Pancreas (tissue), 10 donors: ENCODE measurements at regions of chr1 and their contacts with region 1.

Region 1: DNA sequence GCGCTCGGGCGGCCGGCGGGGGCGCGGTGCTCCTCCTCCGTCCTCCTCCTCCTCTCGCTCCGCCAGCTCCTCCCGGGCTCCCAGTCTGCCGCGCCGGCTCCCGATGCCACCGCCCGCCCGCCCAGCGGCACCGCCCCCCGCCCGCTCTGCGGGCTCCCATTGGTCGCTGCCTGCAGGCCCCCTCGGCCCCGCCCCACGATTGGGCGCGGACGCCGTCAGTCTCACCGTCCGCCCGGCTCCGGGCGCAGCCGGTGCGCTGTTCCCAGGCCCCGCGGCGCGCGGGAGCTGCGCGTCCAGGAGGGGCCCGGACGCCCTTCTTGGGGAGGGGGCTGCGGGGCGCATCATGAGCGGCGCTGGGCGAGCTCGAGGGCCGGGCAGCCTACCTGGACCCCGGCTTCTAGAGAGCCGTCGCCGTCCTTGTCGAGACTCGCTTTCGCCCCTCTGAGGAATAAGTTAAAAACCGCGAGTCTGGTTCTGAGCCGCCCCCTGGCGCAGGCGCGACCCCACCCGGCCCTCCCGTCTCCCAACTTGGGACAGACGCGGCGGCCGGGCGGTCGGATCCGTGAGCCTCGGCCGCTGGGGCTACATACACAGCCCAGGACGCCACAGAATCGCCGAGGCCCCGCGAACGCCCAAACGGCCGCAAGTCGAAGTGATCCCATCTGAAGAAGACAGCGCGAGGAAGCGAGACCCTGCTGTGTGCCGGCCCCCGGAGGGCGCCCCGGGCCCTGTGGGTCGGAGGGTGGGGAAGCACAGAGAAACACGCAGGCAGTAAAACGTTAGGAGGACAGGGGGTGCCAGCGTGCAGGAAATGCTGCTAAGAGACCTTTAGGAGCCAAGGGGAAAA is at the start of gene SIPA1L2:
- DNase-seq: peak; percentile 91 to 99 (median 96)
- ATAC-seq: peak; percentile 93 to 98 (median 97)
- H3K4me3 ChIP-seq: peak within 1 kb of the TSS; percentile 39 to 90 (median 69)
- H3K27ac ChIP-seq: peak within 1 kb of the TSS; percentile 73 to 88 (median 80)
- H3K4me1 ChIP-seq: peaks cover 0 to 2% (median 0%) of the 10 kb centered on the region in 3 donors
- H3K27me3 ChIP-seq: no peaks in the 10 kb centered on the region
- CTCF ChIP-seq: peak in 1 of 4 donors; percentile 14
- total RNA-seq, gene SIPA1L2: 2.6 to 10.9 (median 5.1) TPM

Region 2: DNA sequence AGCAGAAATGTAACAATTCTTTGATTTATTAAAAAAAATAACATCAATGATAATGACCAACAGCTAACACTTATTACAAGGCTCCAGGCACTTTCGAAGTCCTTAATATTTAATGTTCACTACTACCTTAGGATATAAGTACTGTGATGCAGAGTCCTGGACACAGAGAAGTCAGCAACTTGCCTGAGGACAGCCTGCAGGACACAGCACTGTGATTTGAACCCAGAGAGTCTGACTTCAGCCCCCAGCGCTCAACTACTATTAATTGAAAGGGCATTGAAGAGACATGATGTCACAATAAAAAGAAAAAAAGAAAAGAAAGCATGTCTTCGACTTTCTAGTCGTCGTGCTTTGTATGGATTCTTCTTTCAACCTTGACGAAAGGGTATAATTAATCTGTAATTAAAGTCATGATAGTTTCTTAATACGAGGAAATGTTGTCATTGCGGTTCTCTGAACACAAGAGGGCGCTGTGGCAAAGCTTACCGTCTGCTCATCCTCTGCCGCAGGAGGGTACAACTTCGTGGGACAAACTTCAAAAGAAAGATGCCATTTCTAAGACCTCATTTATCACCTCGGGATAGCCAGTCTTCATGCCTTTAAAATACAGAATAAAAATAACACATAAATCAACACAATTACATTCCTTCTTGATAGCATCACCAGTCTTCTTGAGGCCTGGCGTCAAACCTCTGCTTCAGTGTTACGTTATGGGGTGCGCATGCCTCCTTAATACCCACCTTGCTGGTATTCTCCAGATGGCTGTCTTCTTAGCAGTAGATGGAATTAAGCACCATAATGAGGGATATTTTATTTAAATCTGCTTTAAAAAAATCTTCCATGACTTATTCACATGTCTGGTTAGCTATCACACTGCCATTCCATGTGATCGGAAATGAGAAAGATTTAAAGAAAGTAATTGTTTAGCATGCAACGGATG is 763.6 kb before region 1 on chr1:
- intact Hi-C with region 1: loop called in 2 of 3 experiments (anchors 5 to 10 kb)
- DNase-seq: peak in 4 of 6 donors; percentile 30 to 67 (median 36)
- ATAC-seq: peak in 3 of 4 donors; percentile 67 to 83 (median 71)
- H3K4me3 ChIP-seq: no peak overlapping the region
- H3K27ac ChIP-seq: no peak overlapping the region
- H3K4me1 ChIP-seq: no peaks in the 10 kb centered on the region
- H3K27me3 ChIP-seq: no peaks in the 10 kb centered on the region
- CTCF ChIP-seq: peak; percentile 72 to 85 (median 74)

Region 3: DNA sequence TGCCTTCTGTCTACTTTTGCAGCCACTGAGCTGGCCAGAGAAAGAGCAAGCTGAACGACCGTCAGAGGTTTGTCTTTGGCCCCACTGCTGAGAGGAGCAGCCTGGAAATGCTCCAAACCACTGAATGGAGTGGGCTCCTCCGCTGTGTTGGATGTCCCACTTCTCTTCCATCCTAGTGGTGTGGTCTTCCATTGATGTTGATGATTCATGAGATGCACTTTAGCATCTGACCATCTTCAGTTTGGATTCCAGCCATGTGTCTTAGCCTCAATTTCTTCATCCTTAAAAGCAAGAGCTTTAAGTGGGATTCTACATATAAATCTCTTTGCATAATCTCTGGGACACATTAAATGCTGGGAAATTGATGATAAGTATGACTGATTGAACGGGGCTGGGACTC is 277.3 kb before region 1 on chr1:
- intact Hi-C with region 1: no loop called
- DNase-seq: no peak
- ATAC-seq: peak in 1 of 4 donors; percentile 65
- H3K4me3 ChIP-seq: no peak overlapping the region
- H3K27ac ChIP-seq: no peak overlapping the region
- H3K4me1 ChIP-seq: no peaks in the 10 kb centered on the region
- H3K27me3 ChIP-seq: no peaks in the 10 kb centered on the region
- CTCF ChIP-seq: no peak

Region 4: GRCh38 chr1:232950197-232951176 is 320.2 kb after region 1 on chr1 and contains the start of gene NTPCR:
- intact Hi-C with region 1: loop called in 1 of 3 experiments (anchors 10 kb)
- DNase-seq: peak; percentile 87 to 100 (median 96)
- ATAC-seq: peak; percentile 95 to 99 (median 98)
- H3K4me3 ChIP-seq: peak within 1 kb of the TSS; percentile 61 to 84 (median 70)
- H3K27ac ChIP-seq: peak within 1 kb of the TSS; percentile 21 to 80 (median 70)
- H3K4me1 ChIP-seq: peaks cover 0 to 14% (median 5%) of the 10 kb centered on the region in 3 donors
- H3K27me3 ChIP-seq: no peaks in the 10 kb centered on the region
- CTCF ChIP-seq: no peak
- total RNA-seq, gene NTPCR: 10.0 to 24.6 (median 19.1) TPM

Region 5: DNA sequence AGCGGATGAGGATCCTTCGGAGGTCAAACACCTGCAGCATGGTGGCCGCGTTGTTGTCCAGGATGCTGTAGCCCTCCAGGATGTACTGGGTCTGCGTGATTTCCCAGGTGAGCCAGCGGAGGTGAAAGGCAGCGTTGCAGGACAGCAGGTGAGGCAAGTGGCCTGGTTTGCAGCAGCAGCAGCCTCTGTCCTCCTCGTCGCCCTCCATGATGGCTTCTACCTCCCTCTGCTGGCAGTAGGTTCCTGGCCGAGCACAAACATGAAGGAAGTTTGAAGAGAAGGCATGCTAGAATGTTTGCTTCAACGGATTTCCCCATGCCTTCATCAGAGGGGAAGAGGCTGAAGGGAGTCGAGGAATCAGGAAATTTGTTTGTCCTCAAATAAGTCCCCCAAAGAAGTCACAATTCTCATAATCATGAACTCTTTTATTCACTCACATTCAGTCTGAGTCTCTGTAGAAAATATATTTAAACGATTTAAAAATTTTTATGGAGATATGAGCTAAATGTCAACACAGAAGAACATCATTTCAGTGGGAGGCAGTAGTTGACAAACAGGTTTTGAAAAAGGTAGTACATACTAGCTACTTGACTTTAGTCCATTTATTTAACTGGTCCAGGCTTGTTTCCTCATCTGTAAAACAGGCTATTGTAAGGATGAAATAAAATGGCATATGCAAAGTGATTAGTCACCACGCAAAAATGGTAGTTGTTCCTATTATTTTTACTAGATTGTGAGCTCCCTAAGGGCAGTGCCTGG is 395.1 kb after region 1 on chr1:
- intact Hi-C with region 1: loop called in 2 of 3 experiments (anchors 5 to 10 kb)
- DNase-seq: peak in 5 of 6 donors; percentile 49 to 71 (median 53)
- ATAC-seq: peak; percentile 70 to 91 (median 86)
- H3K4me3 ChIP-seq: no peak overlapping the region
- H3K27ac ChIP-seq: no peak overlapping the region
- H3K4me1 ChIP-seq: peaks cover under 1 to 7% (median 2%) of the 10 kb centered on the region in 3 donors
- H3K27me3 ChIP-seq: no peaks in the 10 kb centered on the region
- CTCF ChIP-seq: peak in 3 of 4 donors; percentile 16 to 32 (median 26)

Region 6: GRCh38 chr1:233240829-233241682 is 610.8 kb after region 1 on chr1:
- intact Hi-C with region 1: loop called in 2 of 3 experiments (anchors 10 kb)
- DNase-seq: peak; percentile 27 to 66 (median 52)
- ATAC-seq: peak; percentile 76 to 87 (median 86)
- H3K4me3 ChIP-seq: no peak overlapping the region
- H3K27ac ChIP-seq: peak overlapping the region in 3 of 4 donors; percentile 24 to 66 (median 48)
- H3K4me1 ChIP-seq: peaks cover 0 to 15% (median 5%) of the 10 kb centered on the region in 3 donors
- H3K27me3 ChIP-seq: no peaks in the 10 kb centered on the region
- CTCF ChIP-seq: peak in 3 of 4 donors; percentile 53 to 67 (median 59)